ENCODE measurements at regions of chr2 and their contacts with region 1.

Region 1: DNA sequence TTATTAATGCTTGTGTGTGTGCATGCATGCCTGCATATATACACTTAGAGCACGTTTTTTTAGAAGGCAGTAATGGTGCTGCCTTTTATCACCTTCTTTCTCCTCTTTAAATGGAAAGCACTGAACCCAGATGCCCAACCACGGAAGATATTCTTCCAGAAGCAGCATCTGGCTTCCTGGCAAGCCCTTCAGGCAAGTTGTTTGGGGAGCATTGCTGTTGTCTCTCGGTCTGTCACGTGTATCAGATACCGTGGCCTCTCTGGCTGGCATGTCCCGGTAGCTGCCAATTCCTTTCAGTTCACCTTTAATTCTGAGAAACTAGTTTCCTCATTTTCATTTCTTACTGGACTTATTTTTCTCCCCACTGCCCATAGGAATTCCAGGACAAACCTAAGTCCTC is 587.8 kb downstream of the ARHGAP15 start:
- DNase-seq: no peak
- ATAC-seq: no peak
- H3K4me3 ChIP-seq: no peak overlapping the region
- H3K4me3 Mint-ChIP-seq: no peak overlapping the region
- H3K27ac ChIP-seq: no peak overlapping the region
- H3K27ac Mint-ChIP-seq: peak overlapping the region in 2 of 9 donors; percentile 64 to 66
- H3K4me1 ChIP-seq: no peaks in the 10 kb centered on the region
- H3K4me1 Mint-ChIP-seq: peaks cover 13 to 53% (median 45%) of the 10 kb centered on the region in 7 donors
- H3K27me3 ChIP-seq: no peaks in the 10 kb centered on the region
- H3K27me3 Mint-ChIP-seq: no peaks in the 10 kb centered on the region

Region 2: DNA sequence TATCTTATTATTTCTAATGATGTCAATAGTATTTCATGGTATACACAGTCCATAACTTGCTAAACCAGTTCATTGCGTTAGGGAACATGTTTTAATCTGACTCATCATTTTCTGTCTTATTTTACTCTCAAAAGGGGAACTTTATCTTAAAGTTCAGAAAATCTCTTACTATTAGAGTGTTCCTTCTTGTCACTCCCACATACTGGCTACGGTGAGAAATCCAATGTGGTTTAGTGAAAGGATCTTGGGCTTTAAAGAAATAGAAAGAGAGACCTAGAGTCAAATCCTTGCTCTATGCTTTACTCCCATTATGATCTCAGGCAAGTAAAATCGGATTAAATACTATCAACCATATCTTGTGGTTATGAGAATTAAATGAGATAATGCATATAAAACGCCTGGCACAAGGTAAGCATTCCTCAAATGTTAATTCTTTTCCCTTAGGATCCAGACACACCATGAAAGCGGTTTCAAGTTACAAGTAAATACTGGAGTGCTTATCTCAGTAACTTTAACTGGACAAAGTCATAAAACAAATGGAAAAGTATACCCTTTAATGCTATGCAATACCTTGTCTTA is 11.9 kb before region 1 on chr2:
- CTCF ChIA-PET with region 1: no interaction called
- POLR2A ChIA-PET with region 1: no interaction called
- intact Hi-C with region 1: loop called in 1 of 2 experiments (anchors 1 kb)
- DNase-seq: no peak
- ATAC-seq: peak; percentile 41
- H3K4me3 ChIP-seq: no peak overlapping the region
- H3K4me3 Mint-ChIP-seq: no peak overlapping the region
- H3K27ac ChIP-seq: no peak overlapping the region
- H3K27ac Mint-ChIP-seq: peak overlapping the region in 1 of 9 donors; percentile 18
- H3K4me1 ChIP-seq: no peaks in the 10 kb centered on the region
- H3K4me1 Mint-ChIP-seq: peaks cover 0 to 29% (median 12%) of the 10 kb centered on the region in 7 donors
- H3K27me3 ChIP-seq: no peaks in the 10 kb centered on the region
- H3K27me3 Mint-ChIP-seq: no peaks in the 10 kb centered on the region

Region 3: GRCh38 chr2:143742581-143742980 is 25.5 kb after region 1 on chr2:
- CTCF ChIA-PET with region 1: no interaction called
- POLR2A ChIA-PET with region 1: no interaction called
- intact Hi-C with region 1: no loop called
- DNase-seq: no peak
- ATAC-seq: no peak
- H3K4me3 ChIP-seq: no peak overlapping the region
- H3K4me3 Mint-ChIP-seq: peak overlapping the region in 1 of 10 donors; percentile 0
- H3K27ac ChIP-seq: no peak overlapping the region
- H3K27ac Mint-ChIP-seq: peak overlapping the region in 3 of 9 donors; percentile 13 to 29 (median 26)
- H3K4me1 ChIP-seq: no peaks in the 10 kb centered on the region
- H3K4me1 Mint-ChIP-seq: peaks cover 0 to 24% (median 6%) of the 10 kb centered on the region in 7 donors
- H3K27me3 ChIP-seq: no peaks in the 10 kb centered on the region
- H3K27me3 Mint-ChIP-seq: no peaks in the 10 kb centered on the region

Measured in naive thymus-derived CD4-positive, alpha-beta T cell (primary cell).